GM12878 (cell line): ENCODE measurements at regions of chr17 and their contacts with region 1.

Region 1: GRCh38 chr17:74203439-74204240 is at the start of gene RPL38:
- DNase-seq: peak; percentile 91
- ATAC-seq: peak; percentile 80
- H3K4me3 ChIP-seq: peak within 1 kb of the TSS; percentile 99
- H3K27ac ChIP-seq: peak within 1 kb of the TSS; percentile 90
- H3K4me1 ChIP-seq: peaks cover 10% of the 10 kb centered on the region
- H3K27me3 ChIP-seq: peaks cover 0 to 7% of the 10 kb centered on the region in 2 experiments; a peak in 3 of 4 replicates
- CTCF ChIP-seq: peak; percentile 93 to 97 (median 96); a peak in 5 of 6 replicates
- EP300 ChIP-seq: 0 out of 4 replicates have a peak, but pooled peaks of 1 of the 2 experiments have one; percentile 34
- POLR2A ChIP-seq: peak; percentile 100
- RAD21 ChIP-seq: peak; percentile 30; the same call in 1 of the 2 replicates
- polyA plus RNA-seq, gene RPL38: 2,918 to 3,855 TPM

Region 2: GRCh38 chr17:74089869-74090464 is 113.7 kb before region 1 on chr17:
- CTCF ChIA-PET with region 1: interaction called, 68 read pairs
- POLR2A ChIA-PET with region 1: interaction called, 4 read pairs
- RAD21 ChIA-PET with region 1: interaction called, 14 read pairs
- SMC1A ChIA-PET with region 1: interaction called, 6 read pairs
- in situ Hi-C with region 1: no loop called
- intact Hi-C with region 1: loop called (anchors 2 kb)
- DNase-seq: peak; percentile 11
- ATAC-seq: peak; percentile 79
- H3K4me3 ChIP-seq: no peak overlapping the region
- H3K27ac ChIP-seq: no peak overlapping the region
- H3K4me1 ChIP-seq: no peaks in the 10 kb centered on the region
- H3K27me3 ChIP-seq: no peaks in the 10 kb centered on the region; a peak in 1 of 4 replicates
- CTCF ChIP-seq: peak; percentile 68 to 90 (median 89)
- EP300 ChIP-seq: no peak
- POLR2A ChIP-seq: no peak
- RAD21 ChIP-seq: peak; percentile 52

Region 3: DNA sequence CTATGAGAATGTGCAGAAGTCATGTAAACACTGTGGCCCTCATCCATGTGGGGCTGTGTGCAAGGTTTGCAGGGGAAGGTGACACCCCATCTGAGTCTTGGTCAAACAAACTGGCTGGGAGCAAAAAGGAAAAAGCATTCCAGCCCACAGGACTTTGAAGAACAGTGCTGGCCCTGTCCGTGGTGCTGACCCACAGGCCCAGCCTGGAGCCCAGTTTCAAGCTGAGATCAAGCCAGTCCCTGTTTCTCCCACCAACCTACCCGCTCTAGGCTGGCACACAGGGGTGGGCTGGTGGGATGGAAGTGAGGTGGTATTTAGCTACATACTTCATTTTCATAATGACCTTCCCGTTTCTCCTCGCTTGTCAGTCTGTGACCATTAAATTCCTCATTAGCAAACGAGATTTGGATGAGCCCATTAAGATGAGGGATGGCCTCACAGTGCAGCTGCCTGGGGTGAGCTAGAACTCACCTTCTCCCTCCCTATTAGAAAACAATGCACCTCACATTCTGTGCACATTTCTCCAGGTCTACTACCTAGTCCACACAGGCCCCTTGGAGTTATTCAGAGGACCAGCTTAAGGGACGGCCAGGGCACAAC is 12.7 kb before region 1 on chr17:
- CTCF ChIA-PET with region 1: interaction called, 10 read pairs
- POLR2A ChIA-PET with region 1: no interaction called
- RAD21 ChIA-PET with region 1: no interaction called
- SMC1A ChIA-PET with region 1: interaction called, 3 read pairs
- in situ Hi-C with region 1: no loop called
- intact Hi-C with region 1: no loop called
- DNase-seq: no peak
- ATAC-seq: no peak
- H3K4me3 ChIP-seq: no peak overlapping the region
- H3K27ac ChIP-seq: no peak overlapping the region
- H3K4me1 ChIP-seq: peaks cover 3% of the 10 kb centered on the region; the same call in 1 of the 2 replicates
- H3K27me3 ChIP-seq: no peaks in the 10 kb centered on the region; a peak in 1 of 4 replicates
- CTCF ChIP-seq: no peak
- EP300 ChIP-seq: no peak
- POLR2A ChIP-seq: no peak
- RAD21 ChIP-seq: no peak

Region 4: DNA sequence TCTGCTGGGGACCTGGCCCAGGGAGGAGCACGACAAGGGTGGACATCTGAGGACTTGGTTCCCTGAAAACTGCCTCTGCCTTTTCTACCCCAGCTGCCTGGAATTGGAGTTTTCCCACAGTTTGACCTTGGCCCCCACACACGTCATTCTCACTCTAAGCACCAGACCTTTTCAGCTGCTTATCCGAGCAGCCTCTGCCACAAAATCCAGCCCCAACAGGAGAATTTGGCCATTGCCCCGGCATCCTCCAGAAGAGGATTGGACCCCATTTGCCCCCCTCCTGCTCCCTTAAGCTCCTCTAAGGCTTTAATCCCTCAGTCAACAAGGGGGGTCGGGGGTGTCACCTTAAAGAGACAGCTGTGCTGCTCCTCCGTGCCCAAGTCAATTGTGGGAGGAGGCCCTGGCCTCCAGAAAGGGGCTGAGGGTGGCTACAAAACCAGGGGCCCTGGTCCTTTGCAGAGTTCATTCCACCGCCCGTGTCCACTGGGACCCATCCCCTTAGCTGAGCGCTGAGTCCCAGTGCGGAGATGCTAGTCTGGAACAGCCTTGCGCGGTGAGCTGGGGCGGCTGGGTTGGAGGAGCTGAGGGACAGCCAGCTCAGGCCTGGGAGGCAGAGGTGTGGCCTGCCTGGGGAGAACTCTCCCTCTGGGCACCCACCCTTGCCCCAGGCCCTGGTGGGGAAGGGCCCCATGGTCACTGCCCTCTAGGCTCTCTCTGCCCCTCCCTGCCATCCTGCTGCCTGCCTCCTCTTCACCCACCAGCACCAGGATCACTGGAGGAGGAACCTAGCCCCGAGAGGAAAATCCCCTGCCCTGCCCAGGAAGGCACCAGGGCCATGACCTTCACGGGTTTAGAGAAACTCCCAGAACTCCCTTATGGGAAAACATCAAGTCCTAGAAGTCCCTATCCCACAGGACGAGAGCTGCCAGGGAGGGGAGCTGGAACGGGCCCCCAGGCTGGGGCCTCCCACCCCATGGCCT is 28.6 kb after region 1 on chr17:
- CTCF ChIA-PET with region 1: no interaction called
- POLR2A ChIA-PET with region 1: no interaction called
- RAD21 ChIA-PET with region 1: no interaction called
- SMC1A ChIA-PET with region 1: no interaction called
- in situ Hi-C with region 1: loop called (anchors 5 kb)
- intact Hi-C with region 1: no loop called
- DNase-seq: no peak
- ATAC-seq: no peak
- H3K4me3 ChIP-seq: no peak overlapping the region
- H3K27ac ChIP-seq: no peak overlapping the region
- H3K4me1 ChIP-seq: peaks cover 6% of the 10 kb centered on the region; the same call in 1 of the 2 replicates
- H3K27me3 ChIP-seq: no peaks in the 10 kb centered on the region
- CTCF ChIP-seq: no peak
- EP300 ChIP-seq: no peak
- POLR2A ChIP-seq: no peak
- RAD21 ChIP-seq: no peak

Region 5: GRCh38 chr17:74325743-74326379 is 122.2 kb after region 1 on chr17 and contains the start of gene KIF19:
- CTCF ChIA-PET with region 1: no interaction called
- POLR2A ChIA-PET with region 1: no interaction called
- RAD21 ChIA-PET with region 1: no interaction called
- SMC1A ChIA-PET with region 1: no interaction called
- in situ Hi-C with region 1: no loop called
- intact Hi-C with region 1: no loop called
- DNase-seq: no peak
- ATAC-seq: peak; percentile 64
- H3K4me3 ChIP-seq: no peak within 1 kb of the TSS
- H3K27ac ChIP-seq: no peak within 1 kb of the TSS
- H3K4me1 ChIP-seq: no peaks in the 10 kb centered on the region
- H3K27me3 ChIP-seq: peaks cover 4 to 8% of the 10 kb centered on the region in 2 experiments; a peak in 3 of 4 replicates
- CTCF ChIP-seq: no peak
- EP300 ChIP-seq: no peak
- POLR2A ChIP-seq: no peak
- RAD21 ChIP-seq: no peak
- polyA plus RNA-seq, gene KIF19: not detected